ENCODE measurements at regions of chr19 and their contacts with region 1.

Region 1: DNA sequence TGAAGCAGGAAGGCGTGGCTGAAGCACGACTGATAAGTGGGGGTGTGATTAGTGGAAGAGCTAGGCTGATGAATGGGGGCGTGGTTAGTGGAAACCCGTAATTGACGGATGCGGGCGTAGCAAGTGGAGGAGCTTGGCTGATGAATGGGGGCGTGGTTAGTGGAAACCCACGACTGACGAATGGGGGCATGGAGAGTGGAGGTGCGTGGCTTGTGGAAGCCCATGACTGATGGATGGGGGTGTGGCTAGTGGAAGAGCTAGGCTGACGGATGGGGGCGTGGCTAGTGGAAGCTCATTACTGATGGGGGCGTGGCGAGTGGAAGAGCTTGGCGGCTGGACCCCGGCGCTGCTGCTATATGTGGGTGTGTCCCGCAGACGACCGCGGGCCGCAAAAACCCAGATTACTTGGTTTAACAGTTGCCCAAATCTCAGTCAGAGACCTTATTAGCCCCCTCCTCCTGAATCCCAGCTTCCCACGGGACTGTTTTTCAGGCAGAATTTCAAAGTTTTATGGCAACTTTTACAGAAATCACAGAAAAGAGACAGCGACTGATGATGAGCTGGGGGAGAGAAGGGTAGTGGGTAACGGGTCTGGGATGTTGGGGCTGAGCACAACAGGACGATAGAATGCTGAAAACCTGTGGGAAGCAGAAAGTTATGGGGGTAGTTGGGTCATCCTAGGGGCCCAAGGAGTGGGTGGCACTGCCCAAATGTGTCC is 9.0 kb upstream of the MEIS3 start:
- DNase-seq: peak; percentile 75
- ATAC-seq: peak; percentile 89
- H3K4me3 ChIP-seq: 0 out of 2 replicates have a peak overlapping the region, but pooled peaks have one; percentile 18
- H3K27ac ChIP-seq: no peak overlapping the region
- H3K4me1 ChIP-seq: peaks cover 9% of the 10 kb centered on the region
- H3K27me3 ChIP-seq: peaks cover 4 to 14% of the 10 kb centered on the region in 2 experiments
- CTCF ChIP-seq: no peak
- EP300 ChIP-seq: no peak
- POLR2A ChIP-seq: no peak
- RAD21 ChIP-seq: no peak

Region 2: DNA sequence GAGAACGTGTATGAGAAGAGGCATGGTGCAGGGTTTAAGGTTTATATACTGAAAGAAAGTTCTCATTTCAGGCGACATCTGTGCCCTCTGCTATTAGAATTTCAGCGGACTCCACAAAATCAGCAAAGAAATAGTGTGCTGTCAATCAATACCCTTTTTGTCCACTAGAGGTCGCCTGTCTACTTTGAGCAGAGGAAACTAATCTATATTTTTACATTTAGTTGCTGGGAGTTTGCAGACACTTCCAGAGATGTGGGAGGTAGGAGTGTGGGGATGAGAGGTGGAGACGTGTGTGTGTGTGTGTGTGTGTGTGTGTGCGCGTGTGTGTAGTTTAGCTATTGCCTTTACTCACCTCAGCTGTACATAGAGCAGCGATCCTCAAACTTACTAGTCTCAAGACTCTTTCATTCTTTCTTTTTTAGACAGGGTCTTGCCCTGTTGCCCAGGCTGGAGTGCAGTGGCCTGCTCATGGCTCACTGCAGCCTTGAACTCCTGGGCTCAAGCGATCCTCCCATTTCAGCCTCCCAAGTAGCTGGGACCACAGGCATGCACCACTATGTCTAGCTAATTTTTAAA is 143.9 kb before region 1 on chr19:
- CTCF ChIA-PET with region 1: interaction called, 14 read pairs
- POLR2A ChIA-PET with region 1: no interaction called
- RAD21 ChIA-PET with region 1: interaction called, 10 read pairs
- SMC1A ChIA-PET with region 1: interaction called, 7 read pairs
- in situ Hi-C with region 1: no loop called
- intact Hi-C with region 1: loop called (anchors 1 kb)
- DNase-seq: no peak
- ATAC-seq: peak; percentile 46
- H3K4me3 ChIP-seq: no peak overlapping the region
- H3K27ac ChIP-seq: no peak overlapping the region
- H3K4me1 ChIP-seq: peaks cover 15% of the 10 kb centered on the region
- H3K27me3 ChIP-seq: no peaks in the 10 kb centered on the region
- CTCF ChIP-seq: peak; percentile 73 to 85 (median 79)
- EP300 ChIP-seq: no peak
- POLR2A ChIP-seq: no peak
- RAD21 ChIP-seq: peak; percentile 58

Region 3: GRCh38 chr19:47296036-47296435 is 132.3 kb before region 1 on chr19:
- CTCF ChIA-PET with region 1: interaction called, 28 read pairs
- POLR2A ChIA-PET with region 1: interaction called, 3 read pairs
- RAD21 ChIA-PET with region 1: interaction called, 19 read pairs
- SMC1A ChIA-PET with region 1: interaction called, 12 read pairs
- in situ Hi-C with region 1: loop called (anchors 5 kb)
- intact Hi-C with region 1: loop called (anchors 1 kb)
- DNase-seq: no peak
- ATAC-seq: peak; percentile 94
- H3K4me3 ChIP-seq: no peak overlapping the region
- H3K27ac ChIP-seq: no peak overlapping the region
- H3K4me1 ChIP-seq: peaks cover 12% of the 10 kb centered on the region
- H3K27me3 ChIP-seq: no peaks in the 10 kb centered on the region
- CTCF ChIP-seq: peak; percentile 66 to 86 (median 69)
- EP300 ChIP-seq: no peak
- POLR2A ChIP-seq: no peak
- RAD21 ChIP-seq: peak; percentile 89

Region 4: DNA sequence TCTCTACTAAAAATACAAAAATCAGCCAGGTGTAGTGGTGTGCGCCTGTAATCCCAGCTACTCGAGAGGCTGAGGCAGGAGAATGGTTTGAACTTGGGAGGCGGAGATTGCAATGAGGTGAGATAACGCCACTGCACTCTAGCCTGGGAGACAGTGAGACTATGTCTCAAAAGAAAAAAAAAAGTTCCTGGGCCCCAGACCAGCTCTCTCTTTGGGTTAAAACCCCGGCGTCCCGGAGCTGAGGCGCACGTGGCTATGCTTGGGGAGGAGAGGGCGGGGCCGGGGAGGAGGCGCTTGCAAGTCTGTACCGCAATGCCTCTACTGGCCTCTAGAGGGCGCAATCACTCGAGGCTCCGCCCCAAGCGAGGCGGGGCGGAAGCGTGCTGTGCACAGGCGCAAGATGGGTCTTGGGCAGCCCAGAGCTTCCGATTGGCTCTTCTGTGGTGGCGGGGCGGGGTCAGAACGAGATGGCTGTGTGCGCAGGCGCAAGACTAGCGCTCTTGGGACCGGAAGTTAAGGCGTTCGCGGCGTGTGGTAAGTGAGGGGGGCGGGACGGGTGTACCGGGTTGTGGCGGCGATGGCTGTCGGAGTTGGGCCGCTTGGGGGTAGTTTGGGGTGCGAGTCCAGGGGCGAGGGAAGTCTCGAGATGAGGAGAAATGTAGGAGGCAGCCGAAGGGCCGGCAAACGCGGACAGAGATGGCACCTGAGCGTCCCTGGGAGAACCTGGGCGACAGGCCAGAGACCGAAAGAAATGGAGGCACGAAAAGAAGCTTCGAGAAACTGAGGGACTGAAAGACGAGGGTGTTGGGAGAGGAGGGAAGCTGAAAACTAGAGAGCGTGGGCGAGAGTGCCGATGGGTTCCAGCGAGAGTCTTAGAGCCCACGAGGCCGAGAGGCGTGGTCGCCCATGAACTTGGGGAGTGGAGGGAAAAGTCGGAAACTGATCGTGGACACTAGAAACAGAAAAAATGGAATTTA is 79.2 kb before region 1 on chr19 and contains the start of gene DHX34:
- CTCF ChIA-PET with region 1: interaction called, 12 read pairs
- POLR2A ChIA-PET with region 1: no interaction called
- RAD21 ChIA-PET with region 1: interaction called, 5 read pairs
- SMC1A ChIA-PET with region 1: no interaction called
- in situ Hi-C with region 1: no loop called
- intact Hi-C with region 1: no loop called
- DNase-seq: peak; percentile 98
- ATAC-seq: peak; percentile 99
- H3K4me3 ChIP-seq: peak within 1 kb of the TSS; percentile 80
- H3K27ac ChIP-seq: peak within 1 kb of the TSS; percentile 76
- H3K4me1 ChIP-seq: peaks cover 7% of the 10 kb centered on the region
- H3K27me3 ChIP-seq: no peaks in the 10 kb centered on the region
- CTCF ChIP-seq: peak; percentile 96 to 99 (median 98); a peak in 5 of 6 replicates
- EP300 ChIP-seq: no peak
- POLR2A ChIP-seq: peak; percentile 94
- RAD21 ChIP-seq: no peak
- polyA plus RNA-seq, gene DHX34: 0.19 to 0.37 TPM

Region 5: DNA sequence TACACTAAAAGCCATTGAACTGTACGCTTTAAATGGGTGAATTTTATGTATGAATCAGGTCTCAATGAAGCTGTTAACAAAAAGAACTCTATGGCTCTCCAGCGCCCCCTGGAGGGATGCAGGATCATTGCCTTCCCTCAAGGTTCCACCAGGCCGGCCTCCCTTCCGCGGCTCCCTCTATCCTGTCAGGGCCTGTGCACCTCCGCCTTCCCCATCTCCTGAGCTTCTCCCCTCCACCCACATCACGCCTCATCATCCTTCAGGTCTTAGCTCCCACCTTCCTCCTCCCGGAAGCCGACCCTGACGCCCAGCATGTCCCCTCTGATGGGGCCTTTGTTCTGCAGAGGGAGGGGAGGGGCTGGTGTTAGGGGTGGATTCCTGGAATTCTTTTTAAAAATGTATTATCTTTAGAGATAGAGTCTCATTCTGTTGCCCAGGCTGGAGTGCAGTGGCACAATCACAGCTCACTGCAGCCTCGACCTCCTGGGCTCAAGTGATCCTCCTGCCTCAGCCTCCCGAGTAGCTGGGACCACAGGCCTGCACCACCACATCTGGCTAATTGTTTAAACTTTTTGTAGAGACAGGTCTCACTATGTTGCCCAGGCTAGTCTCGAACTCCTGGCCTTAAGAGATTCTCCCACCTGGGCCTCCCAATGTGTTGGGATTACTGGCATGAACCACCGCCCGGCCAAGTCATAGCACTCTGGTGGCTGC is 36.7 kb before region 1 on chr19:
- CTCF ChIA-PET with region 1: interaction called, 8 read pairs
- POLR2A ChIA-PET with region 1: no interaction called
- RAD21 ChIA-PET with region 1: interaction called, 3 read pairs
- SMC1A ChIA-PET with region 1: interaction called, 3 read pairs
- in situ Hi-C with region 1: no loop called
- intact Hi-C with region 1: loop called (anchors 1 kb)
- DNase-seq: peak; percentile 12
- ATAC-seq: peak; percentile 98
- H3K4me3 ChIP-seq: no peak overlapping the region
- H3K27ac ChIP-seq: no peak overlapping the region; the same call in 1 of the 2 replicates
- H3K4me1 ChIP-seq: no peaks in the 10 kb centered on the region
- H3K27me3 ChIP-seq: no peaks in the 10 kb centered on the region
- CTCF ChIP-seq: peak; percentile 86 to 92 (median 88)
- EP300 ChIP-seq: no peak
- POLR2A ChIP-seq: no peak
- RAD21 ChIP-seq: peak; percentile 73

Region 6: GRCh38 chr19:47483800-47484690 is 55.7 kb after region 1 on chr19 and contains the start of gene KPTN:
- CTCF ChIA-PET with region 1: interaction called, 12 read pairs
- POLR2A ChIA-PET with region 1: no interaction called
- RAD21 ChIA-PET with region 1: interaction called, 4 read pairs
- SMC1A ChIA-PET with region 1: interaction called, 3 read pairs
- in situ Hi-C with region 1: no loop called
- intact Hi-C with region 1: no loop called
- DNase-seq: peak; percentile 57
- ATAC-seq: peak; percentile 88
- H3K4me3 ChIP-seq: peak within 1 kb of the TSS; percentile 96
- H3K27ac ChIP-seq: peak within 1 kb of the TSS; percentile 89
- H3K4me1 ChIP-seq: peaks cover 35% of the 10 kb centered on the region
- H3K27me3 ChIP-seq: no peaks in the 10 kb centered on the region
- CTCF ChIP-seq: peak; percentile 87 to 99 (median 97)
- EP300 ChIP-seq: no peak
- POLR2A ChIP-seq: peak; percentile 91
- RAD21 ChIP-seq: peak; percentile 66
- polyA plus RNA-seq, gene KPTN: 0.60 to 2.1 TPM

Region 7: GRCh38 chr19:47707135-47707925 is 279.0 kb after region 1 on chr19:
- CTCF ChIA-PET with region 1: interaction called, 163 read pairs
- POLR2A ChIA-PET with region 1: no interaction called
- RAD21 ChIA-PET with region 1: interaction called, 5 read pairs
- SMC1A ChIA-PET with region 1: interaction called, 9 read pairs
- in situ Hi-C with region 1: no loop called
- intact Hi-C with region 1: no loop called
- DNase-seq: peak; percentile 21
- ATAC-seq: peak; percentile 100
- H3K4me3 ChIP-seq: no peak overlapping the region
- H3K27ac ChIP-seq: no peak overlapping the region
- H3K4me1 ChIP-seq: no peaks in the 10 kb centered on the region
- H3K27me3 ChIP-seq: no peaks in the 10 kb centered on the region
- CTCF ChIP-seq: peak; percentile 87 to 93 (median 91)
- EP300 ChIP-seq: no peak
- POLR2A ChIP-seq: no peak
- RAD21 ChIP-seq: peak; percentile 85

Measured in GM12878 (cell line).